Mammary epithelial cell (primary cell): ENCODE measurements at regions of chr15 and their contacts with region 1.

Region 1: GRCh38 chr15:80970018-80970658 is 19.5 kb downstream of the MESD start:
- DNase-seq: peak; percentile 37
- H3K4me3 ChIP-seq: no peak overlapping the region
- H3K27ac ChIP-seq: no peak overlapping the region
- H3K4me1 ChIP-seq: no peaks in the 10 kb centered on the region
- H3K27me3 ChIP-seq: no peaks in the 10 kb centered on the region
- CTCF ChIP-seq: peak; percentile 57 to 79

Region 2: DNA sequence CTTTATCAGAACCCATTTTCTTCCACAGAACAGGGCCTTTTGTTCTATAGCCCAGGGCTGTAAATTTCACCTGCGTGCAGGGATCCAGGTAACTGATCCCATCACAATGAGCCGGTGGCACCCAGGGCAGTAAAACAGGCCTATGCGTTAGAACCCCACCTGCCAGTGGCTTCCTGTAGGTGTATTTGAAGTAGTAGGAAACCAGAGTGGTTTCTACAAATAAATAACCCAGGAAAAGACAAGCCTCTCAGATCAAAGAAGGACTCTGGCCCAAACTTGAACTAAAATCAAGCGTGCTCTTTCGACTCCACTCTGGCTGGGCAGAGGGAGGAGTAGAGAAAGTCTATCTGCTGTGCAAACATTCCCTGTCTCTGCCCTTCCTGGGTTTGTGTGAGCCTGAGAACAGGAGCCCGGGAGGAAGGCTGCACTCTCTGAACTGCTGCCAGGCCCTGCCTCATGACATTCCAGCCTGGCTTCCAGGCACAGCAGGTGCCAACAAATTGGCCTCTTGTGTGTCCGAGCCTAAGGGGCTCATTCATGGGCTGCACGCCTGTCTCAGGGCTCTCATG is 113.2 kb before region 1 on chr15:
- CTCF ChIA-PET with region 1: no interaction called
- dilution Hi-C with region 1: no loop called
- in situ Hi-C with region 1: no loop called
- intact Hi-C with region 1: loop called (anchors 5 kb)
- DNase-seq: no peak
- H3K4me3 ChIP-seq: no peak overlapping the region
- H3K27ac ChIP-seq: no peak overlapping the region
- H3K4me1 ChIP-seq: peaks cover 26% of the 10 kb centered on the region
- H3K27me3 ChIP-seq: no peaks in the 10 kb centered on the region
- CTCF ChIP-seq: no peak

Region 3: GRCh38 chr15:80893777-80894176 is 76.4 kb before region 1 on chr15:
- CTCF ChIA-PET with region 1: no interaction called
- dilution Hi-C with region 1: loop called (anchors 5 kb)
- in situ Hi-C with region 1: no loop called
- intact Hi-C with region 1: no loop called
- DNase-seq: no peak
- H3K4me3 ChIP-seq: no peak overlapping the region
- H3K27ac ChIP-seq: no peak overlapping the region
- H3K4me1 ChIP-seq: peaks cover 3% of the 10 kb centered on the region
- H3K27me3 ChIP-seq: no peaks in the 10 kb centered on the region
- CTCF ChIP-seq: no peak

Region 4: GRCh38 chr15:80911067-80911466 is 59.1 kb before region 1 on chr15:
- CTCF ChIA-PET with region 1: no interaction called
- dilution Hi-C with region 1: no loop called
- in situ Hi-C with region 1: no loop called
- intact Hi-C with region 1: loop called (anchors 1 kb)
- DNase-seq: no peak
- H3K4me3 ChIP-seq: no peak overlapping the region
- H3K27ac ChIP-seq: no peak overlapping the region
- H3K4me1 ChIP-seq: no peaks in the 10 kb centered on the region
- H3K27me3 ChIP-seq: no peaks in the 10 kb centered on the region
- CTCF ChIP-seq: peak in 1 of 2 donors; percentile 22

Region 5: GRCh38 chr15:81293728-81294515 is 323.8 kb after region 1 on chr15:
- CTCF ChIA-PET with region 1: no interaction called
- dilution Hi-C with region 1: no loop called
- in situ Hi-C with region 1: no loop called
- intact Hi-C with region 1: no loop called
- DNase-seq: no peak
- H3K4me3 ChIP-seq: no peak overlapping the region
- H3K27ac ChIP-seq: no peak overlapping the region
- H3K4me1 ChIP-seq: peaks cover 22% of the 10 kb centered on the region
- H3K27me3 ChIP-seq: no peaks in the 10 kb centered on the region
- CTCF ChIP-seq: no peak